ENCODE measurements at regions of chr2 and their contacts with region 1.

Region 1: GRCh38 chr2:109510136-109511028 is 103.4 kb downstream of the SEPTIN10 start:
- DNase-seq: peak; percentile 58 to 87 (median 74)
- ATAC-seq: peak; percentile 92
- H3K4me3 ChIP-seq: no peak overlapping the region
- H3K4me3 Mint-ChIP-seq: no peak overlapping the region
- H3K27ac ChIP-seq: no peak overlapping the region
- H3K27ac Mint-ChIP-seq: no peak overlapping the region
- H3K4me1 ChIP-seq: no peaks in the 10 kb centered on the region
- H3K4me1 Mint-ChIP-seq: peaks cover 5% of the 10 kb centered on the region
- H3K27me3 ChIP-seq: no peaks in the 10 kb centered on the region
- H3K27me3 Mint-ChIP-seq: no peaks in the 10 kb centered on the region
- CTCF ChIP-seq: peak; percentile 79

Region 2: DNA sequence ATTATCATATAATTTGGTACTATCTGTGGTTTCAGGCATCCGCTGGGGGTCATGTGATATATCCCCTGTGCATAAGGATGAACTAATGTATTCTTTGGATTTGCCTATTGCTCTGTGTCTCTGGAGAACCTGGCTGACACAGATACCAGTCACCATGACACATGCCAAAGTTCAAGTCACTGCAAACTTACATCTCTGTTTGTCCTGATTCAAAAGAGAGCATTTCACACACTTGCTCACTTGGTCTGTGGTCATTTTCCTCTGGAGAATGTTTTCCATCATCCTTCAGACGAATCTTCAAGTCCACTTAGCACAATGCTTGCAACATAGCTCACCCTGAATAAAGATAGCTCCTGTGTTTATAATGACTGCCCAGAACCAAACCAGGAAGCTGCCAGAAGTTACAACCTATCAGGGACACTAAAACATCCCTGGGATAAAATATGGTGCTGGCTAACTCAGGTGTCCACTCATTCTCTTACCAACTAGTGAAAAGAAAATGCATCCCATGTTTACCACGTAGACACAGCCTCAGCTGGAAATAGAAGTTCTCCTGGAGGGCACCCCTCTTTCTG is 1252.5 kb before region 1 on chr2:
- CTCF ChIA-PET with region 1: no interaction called
- POLR2A ChIA-PET with region 1: no interaction called
- intact Hi-C with region 1: no loop called
- DNase-seq: no peak
- ATAC-seq: no peak
- H3K4me3 ChIP-seq: no peak overlapping the region
- H3K4me3 Mint-ChIP-seq: no peak overlapping the region
- H3K27ac ChIP-seq: no peak overlapping the region
- H3K27ac Mint-ChIP-seq: no peak overlapping the region
- H3K4me1 ChIP-seq: no peaks in the 10 kb centered on the region
- H3K4me1 Mint-ChIP-seq: no peaks in the 10 kb centered on the region
- H3K27me3 ChIP-seq: no peaks in the 10 kb centered on the region
- H3K27me3 Mint-ChIP-seq: peaks cover 2% of the 10 kb centered on the region
- CTCF ChIP-seq: no peak

Region 3: GRCh38 chr2:108855194-108855593 is 655.2 kb before region 1 on chr2:
- CTCF ChIA-PET with region 1: interaction called, 24 read pairs
- POLR2A ChIA-PET with region 1: no interaction called
- intact Hi-C with region 1: loop called (anchors 1 kb)
- DNase-seq: peak in 2 of 9 experiments; percentile 32 to 57
- ATAC-seq: peak; percentile 61
- H3K4me3 ChIP-seq: no peak overlapping the region
- H3K4me3 Mint-ChIP-seq: no peak overlapping the region
- H3K27ac ChIP-seq: no peak overlapping the region
- H3K27ac Mint-ChIP-seq: no peak overlapping the region
- H3K4me1 ChIP-seq: no peaks in the 10 kb centered on the region
- H3K4me1 Mint-ChIP-seq: peaks cover 4% of the 10 kb centered on the region
- H3K27me3 ChIP-seq: no peaks in the 10 kb centered on the region
- H3K27me3 Mint-ChIP-seq: no peaks in the 10 kb centered on the region
- CTCF ChIP-seq: peak; percentile 61

Region 4: GRCh38 chr2:109005686-109006204 is 504.6 kb before region 1 on chr2:
- CTCF ChIA-PET with region 1: no interaction called
- POLR2A ChIA-PET with region 1: no interaction called
- intact Hi-C with region 1: loop called in 1 of 2 experiments (anchors 10 kb)
- DNase-seq: no peak
- ATAC-seq: no peak
- H3K4me3 ChIP-seq: no peak overlapping the region
- H3K4me3 Mint-ChIP-seq: no peak overlapping the region
- H3K27ac ChIP-seq: no peak overlapping the region
- H3K27ac Mint-ChIP-seq: no peak overlapping the region
- H3K4me1 ChIP-seq: peaks cover 13% of the 10 kb centered on the region
- H3K4me1 Mint-ChIP-seq: peaks cover 32% of the 10 kb centered on the region
- H3K27me3 ChIP-seq: no peaks in the 10 kb centered on the region
- H3K27me3 Mint-ChIP-seq: no peaks in the 10 kb centered on the region
- CTCF ChIP-seq: no peak

Region 5: DNA sequence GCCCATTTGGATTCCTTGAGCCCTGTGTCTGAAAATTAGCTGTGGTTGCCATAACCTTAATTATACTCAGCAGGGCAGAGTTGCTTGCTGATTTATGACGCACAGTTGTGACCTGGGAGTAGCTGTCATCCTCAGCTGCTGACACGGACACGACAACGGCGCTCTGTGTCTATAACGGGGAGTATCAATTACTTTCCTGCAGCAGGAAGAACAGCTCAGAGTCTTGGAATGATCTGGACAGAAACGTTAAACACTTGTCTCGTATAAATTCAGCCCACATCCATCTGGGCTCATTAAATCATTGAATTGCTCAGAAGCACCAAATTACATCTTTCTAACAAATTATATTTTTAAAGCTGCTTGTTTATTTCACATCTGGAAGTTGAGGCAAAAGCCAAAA is 12.9 kb before region 1 on chr2:
- CTCF ChIA-PET with region 1: interaction called, 16 read pairs
- POLR2A ChIA-PET with region 1: no interaction called
- intact Hi-C with region 1: no loop called
- DNase-seq: no peak
- ATAC-seq: no peak
- H3K4me3 ChIP-seq: no peak overlapping the region
- H3K4me3 Mint-ChIP-seq: no peak overlapping the region
- H3K27ac ChIP-seq: no peak overlapping the region
- H3K27ac Mint-ChIP-seq: no peak overlapping the region
- H3K4me1 ChIP-seq: no peaks in the 10 kb centered on the region
- H3K4me1 Mint-ChIP-seq: no peaks in the 10 kb centered on the region
- H3K27me3 ChIP-seq: no peaks in the 10 kb centered on the region
- H3K27me3 Mint-ChIP-seq: no peaks in the 10 kb centered on the region
- CTCF ChIP-seq: no peak